Activated B cell treated with CpG ODN at 0.5 μM for 24 hours (primary cell): ENCODE measurements at regions of chr6 and their contacts with region 1.

Region 1: GRCh38 chr6:87832025-87832825 is 130.2 kb upstream of the AKIRIN2 start:
- DNase-seq: no peak
- ATAC-seq: peak; percentile 77
- H3K4me3 Mint-ChIP-seq: peak overlapping the region; percentile 85
- H3K27ac Mint-ChIP-seq: peak overlapping the region; percentile 78
- H3K4me1 Mint-ChIP-seq: peaks cover 11% of the 10 kb centered on the region
- H3K27me3 Mint-ChIP-seq: no peaks in the 10 kb centered on the region
- CTCF ChIP-seq: no peak

Region 2: GRCh38 chr6:87393022-87393622 is 439.1 kb before region 1 on chr6:
- CTCF ChIA-PET with region 1: no interaction called
- POLR2A ChIA-PET with region 1: no interaction called
- intact Hi-C with region 1: loop called (anchors 1 kb)
- DNase-seq: no peak
- ATAC-seq: peak; percentile 94
- H3K4me3 Mint-ChIP-seq: no peak overlapping the region
- H3K27ac Mint-ChIP-seq: no peak overlapping the region
- H3K4me1 Mint-ChIP-seq: peaks cover 5% of the 10 kb centered on the region
- H3K27me3 Mint-ChIP-seq: no peaks in the 10 kb centered on the region
- CTCF ChIP-seq: peak; percentile 53

Region 3: GRCh38 chr6:87887266-87887665 is 55.0 kb after region 1 on chr6:
- CTCF ChIA-PET with region 1: no interaction called
- POLR2A ChIA-PET with region 1: no interaction called
- intact Hi-C with region 1: no loop called
- DNase-seq: no peak
- ATAC-seq: no peak
- H3K4me3 Mint-ChIP-seq: no peak overlapping the region
- H3K27ac Mint-ChIP-seq: no peak overlapping the region
- H3K4me1 Mint-ChIP-seq: peaks cover 1% of the 10 kb centered on the region
- H3K27me3 Mint-ChIP-seq: no peaks in the 10 kb centered on the region
- CTCF ChIP-seq: no peak

Region 4: DNA sequence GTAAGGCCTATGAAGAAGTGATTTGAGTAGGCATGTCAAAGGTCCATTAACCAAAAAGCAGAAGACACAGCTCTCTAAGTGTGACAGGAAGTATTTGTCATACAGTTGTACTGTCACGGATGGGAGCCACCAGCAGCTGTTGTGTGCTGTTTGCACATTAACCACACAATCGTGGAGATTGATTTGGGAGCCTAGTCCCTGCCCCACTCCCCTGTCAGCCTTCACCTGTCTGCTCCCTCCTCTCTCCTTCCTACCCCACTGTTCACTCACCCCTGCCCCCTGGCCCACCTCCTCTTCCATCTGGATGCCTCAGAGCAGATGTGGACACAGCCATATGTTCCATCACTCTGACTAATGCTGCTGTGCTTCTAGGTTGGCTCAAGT is 90.7 kb after region 1 on chr6:
- CTCF ChIA-PET with region 1: interaction called, 27 read pairs
- POLR2A ChIA-PET with region 1: interaction called, 4 read pairs
- intact Hi-C with region 1: loop called (anchors 1 kb)
- DNase-seq: peak; percentile 39
- ATAC-seq: peak; percentile 81
- H3K4me3 Mint-ChIP-seq: peak overlapping the region; percentile 33
- H3K27ac Mint-ChIP-seq: peak overlapping the region; percentile 88
- H3K4me1 Mint-ChIP-seq: peaks cover 87% of the 10 kb centered on the region
- H3K27me3 Mint-ChIP-seq: no peaks in the 10 kb centered on the region
- CTCF ChIP-seq: no peak

Region 5: DNA sequence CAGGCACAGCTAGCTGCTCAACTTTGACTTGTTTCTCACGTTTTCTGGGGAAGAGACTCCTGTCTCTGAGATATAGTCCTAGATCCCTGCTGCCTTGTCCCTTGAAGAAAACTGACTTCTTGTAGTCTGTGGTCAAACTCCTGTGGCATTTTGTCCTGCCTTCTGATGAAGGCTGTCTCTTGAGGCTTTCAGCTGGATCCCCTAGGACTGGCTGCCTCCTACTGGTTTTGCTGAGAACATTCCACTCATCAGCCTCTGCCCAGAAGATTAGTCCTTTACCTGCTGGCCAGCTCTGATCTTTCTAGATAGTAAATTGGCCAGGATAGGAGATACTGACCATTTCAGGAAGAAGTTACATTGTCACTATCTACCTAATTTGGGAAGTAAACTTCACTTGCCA is 405.8 kb after region 1 on chr6:
- CTCF ChIA-PET with region 1: interaction called, 49 read pairs
- POLR2A ChIA-PET with region 1: no interaction called
- intact Hi-C with region 1: loop called (anchors 1 kb)
- DNase-seq: no peak
- ATAC-seq: peak; percentile 82
- H3K4me3 Mint-ChIP-seq: no peak overlapping the region
- H3K27ac Mint-ChIP-seq: no peak overlapping the region
- H3K4me1 Mint-ChIP-seq: peaks cover 5% of the 10 kb centered on the region
- H3K27me3 Mint-ChIP-seq: no peaks in the 10 kb centered on the region
- CTCF ChIP-seq: no peak

Region 6: DNA sequence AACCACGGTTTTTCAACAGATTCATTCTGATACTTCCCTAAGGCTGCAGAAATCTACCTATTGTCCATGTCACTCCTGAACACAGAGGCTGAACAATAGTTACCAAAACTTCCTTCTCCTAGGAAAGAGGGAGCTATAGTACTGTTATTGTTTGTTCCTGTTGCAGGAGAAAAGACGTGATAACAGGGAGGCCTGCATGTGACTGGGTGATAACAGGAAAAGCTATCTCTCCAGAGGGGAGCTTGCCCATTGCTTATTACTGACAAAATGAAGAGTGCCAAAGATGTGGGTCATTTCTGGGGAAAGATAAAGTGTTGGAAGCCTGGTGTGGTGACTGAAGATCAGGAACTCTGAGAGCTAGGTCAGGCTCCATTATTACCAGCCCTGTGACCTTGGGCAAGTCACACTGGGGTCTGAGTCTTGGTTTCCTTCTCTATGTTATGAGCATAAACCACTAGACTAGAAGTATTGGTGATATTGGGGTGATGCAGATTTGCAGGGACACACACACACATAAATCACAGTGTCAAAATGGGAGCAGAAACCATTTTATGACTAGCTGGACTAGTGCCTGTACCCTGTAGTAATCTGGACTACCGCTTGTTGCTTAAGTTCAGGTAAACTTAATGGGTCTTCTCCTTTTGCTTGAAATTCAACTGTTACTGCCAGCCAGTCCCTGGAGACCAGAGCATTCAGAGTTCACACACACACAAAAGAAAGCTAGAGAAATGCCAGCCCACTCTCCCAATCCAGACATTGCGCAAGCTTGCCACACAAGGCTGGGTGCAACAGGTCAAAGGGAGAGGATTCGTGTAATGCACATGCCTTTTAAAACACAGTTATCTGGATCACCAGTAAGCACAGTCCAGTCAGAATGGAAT is 469.9 kb after region 1 on chr6:
- CTCF ChIA-PET with region 1: no interaction called
- POLR2A ChIA-PET with region 1: no interaction called
- intact Hi-C with region 1: no loop called
- DNase-seq: no peak
- ATAC-seq: no peak
- H3K4me3 Mint-ChIP-seq: no peak overlapping the region
- H3K27ac Mint-ChIP-seq: no peak overlapping the region
- H3K4me1 Mint-ChIP-seq: no peaks in the 10 kb centered on the region
- H3K27me3 Mint-ChIP-seq: peaks cover 4% of the 10 kb centered on the region
- CTCF ChIP-seq: no peak

Region 7: DNA sequence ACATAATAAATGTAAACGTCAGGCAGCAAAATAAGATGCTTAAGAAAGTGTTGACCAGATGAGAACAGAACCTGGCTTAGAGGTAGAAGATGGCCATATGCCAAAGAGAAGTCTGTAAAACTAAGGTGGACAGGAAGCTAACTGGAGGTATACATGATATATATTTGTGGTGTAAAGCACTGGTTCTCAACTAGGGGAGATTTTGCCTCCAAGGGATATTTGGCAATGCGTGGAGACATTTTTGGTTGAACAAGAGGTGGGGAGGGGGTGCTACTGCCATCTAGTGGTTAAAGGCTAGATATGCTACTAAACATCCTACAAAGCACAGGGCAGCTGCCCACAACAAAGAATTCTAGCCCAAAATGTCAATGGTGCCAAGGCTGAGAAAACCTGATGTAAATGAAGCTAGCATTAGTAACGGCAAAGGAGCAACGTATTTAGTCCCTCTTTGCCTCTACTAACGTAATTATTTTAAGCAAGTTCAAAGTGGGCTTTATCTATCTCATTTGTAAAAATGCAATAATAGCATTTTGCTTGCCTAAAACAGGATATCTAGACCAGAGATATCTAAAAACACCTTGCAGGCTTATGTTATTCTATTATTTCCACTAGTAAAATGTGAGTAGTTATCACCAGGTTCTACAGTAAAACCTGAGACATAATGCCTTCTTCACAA is 948.6 kb after region 1 on chr6:
- CTCF ChIA-PET with region 1: interaction called, 17 read pairs
- POLR2A ChIA-PET with region 1: no interaction called
- intact Hi-C with region 1: loop called (anchors 1 kb)
- DNase-seq: no peak
- ATAC-seq: peak; percentile 83
- H3K4me3 Mint-ChIP-seq: no peak overlapping the region
- H3K27ac Mint-ChIP-seq: no peak overlapping the region
- H3K4me1 Mint-ChIP-seq: peaks cover 16% of the 10 kb centered on the region
- H3K27me3 Mint-ChIP-seq: no peaks in the 10 kb centered on the region
- CTCF ChIP-seq: no peak